Right ventricle myocardium inferior (tissue), 1 donor: ENCODE measurements at regions of chr7 and their contacts with region 1.

Region 1: DNA sequence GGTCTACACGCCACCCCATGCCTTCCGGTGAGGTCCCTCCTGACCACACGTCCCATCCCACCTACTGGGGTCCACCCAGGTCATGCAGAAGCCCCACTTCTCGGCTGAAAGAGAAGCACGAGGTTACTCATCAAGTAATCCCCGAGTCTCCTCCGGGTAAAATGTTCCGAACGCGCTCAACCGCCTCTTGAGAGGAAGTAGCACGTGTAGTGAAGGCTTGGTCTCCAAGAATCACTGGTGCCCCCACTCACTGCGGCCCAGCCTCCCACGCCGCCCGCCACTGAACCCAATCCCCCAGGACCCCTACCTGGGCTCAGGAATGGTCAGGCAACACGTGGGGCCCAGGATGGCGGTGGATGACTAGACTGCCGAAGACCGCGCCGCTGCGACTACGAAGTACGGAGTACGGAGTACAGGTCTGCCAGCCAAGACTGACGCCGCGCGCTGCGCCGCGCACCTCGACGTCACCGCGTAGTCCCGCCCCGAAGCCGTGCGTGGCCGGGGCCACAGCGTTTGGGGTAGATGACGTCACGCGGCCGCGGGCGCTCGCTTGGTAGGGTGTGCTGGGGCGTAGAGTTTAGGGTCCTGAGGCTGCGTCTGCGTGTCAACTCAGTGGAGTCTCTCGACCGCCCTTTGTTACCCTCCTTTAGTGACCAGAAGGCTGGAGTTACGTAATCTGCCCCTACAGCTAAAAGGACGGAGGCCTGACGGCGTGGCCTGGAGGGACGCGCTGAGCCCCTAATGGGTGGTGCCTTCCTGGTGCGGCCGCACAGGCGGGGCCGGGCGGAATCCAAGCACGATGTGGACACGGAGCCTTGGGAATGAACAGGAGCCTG is 7.6 kb upstream of the MYO1G start:
- DNase-seq: peak; percentile 98
- ATAC-seq: peak; percentile 99

Region 2: GRCh38 chr7:44581879-44582603 is 404.4 kb before region 1 on chr7 and contains the start of gene TMED4:
- intact Hi-C with region 1: loop called (anchors 10 kb)
- DNase-seq: peak; percentile 100
- ATAC-seq: peak; percentile 99
- total RNA-seq, gene TMED4: 49.7 TPM

Region 3: DNA sequence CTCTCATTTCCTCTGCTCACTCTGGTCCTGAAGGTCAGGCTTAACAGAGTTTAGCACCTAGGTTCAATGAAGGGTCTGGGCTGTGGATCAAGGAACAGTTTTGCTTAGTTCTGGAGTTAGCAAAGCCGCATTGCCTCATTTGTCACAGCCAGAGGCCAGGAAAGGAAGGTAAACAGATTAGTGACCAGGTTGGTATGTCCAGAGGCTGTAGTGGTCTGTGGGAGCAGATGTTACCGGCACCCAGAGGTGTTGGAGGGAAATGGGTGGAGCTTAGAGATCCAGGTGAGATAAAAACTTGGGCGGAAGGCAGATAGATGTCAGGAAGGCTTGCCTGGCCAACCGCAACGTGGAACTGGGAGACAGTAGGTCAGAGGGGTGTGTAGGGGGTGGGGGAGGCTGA is 274.4 kb before region 1 on chr7:
- intact Hi-C with region 1: no loop called
- DNase-seq: no peak
- ATAC-seq: no peak

Region 4: DNA sequence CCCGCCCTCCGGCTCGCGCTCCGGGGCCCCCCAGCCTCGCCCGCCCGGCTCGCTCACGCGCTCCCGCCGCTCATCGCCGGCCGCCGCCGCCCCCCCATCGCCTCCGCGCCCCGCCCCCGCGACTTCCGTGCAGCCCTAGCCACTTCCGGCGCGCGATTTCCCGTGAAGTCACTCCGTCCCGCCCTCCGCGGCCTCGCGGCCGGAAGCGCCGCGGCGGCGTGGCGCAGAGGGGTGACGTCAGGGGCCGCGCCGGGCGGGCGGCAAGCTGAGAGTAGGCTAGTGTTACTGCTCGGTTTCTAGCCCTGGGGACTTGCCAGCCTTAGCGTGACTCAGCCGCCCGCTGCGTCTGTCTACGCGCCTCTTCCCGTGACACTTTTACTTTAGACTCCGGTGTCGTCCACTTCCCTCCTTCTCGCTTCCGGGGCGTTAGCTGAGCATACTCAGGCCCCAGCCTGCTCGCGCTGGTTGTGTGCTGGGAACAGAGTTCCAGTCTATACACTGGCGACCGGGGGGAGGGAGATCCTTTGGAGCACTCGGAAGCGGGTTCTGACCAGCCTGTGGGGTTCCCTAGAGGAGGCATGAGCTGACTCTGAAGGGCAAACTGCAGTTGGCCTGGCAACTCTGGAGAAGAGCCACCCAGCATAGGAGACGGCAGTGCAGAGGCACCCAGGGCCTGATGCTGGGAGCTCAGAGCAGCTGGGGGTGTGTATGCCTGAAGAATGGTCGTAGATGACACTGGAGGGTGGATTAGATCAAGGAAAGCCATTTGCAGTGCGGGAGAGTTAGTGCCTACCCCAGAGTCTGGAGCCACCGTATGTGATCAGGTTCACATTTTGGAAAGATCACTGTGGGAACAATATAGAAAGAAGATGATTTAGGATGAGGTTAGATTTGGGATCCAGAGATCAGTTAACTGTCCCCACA is 100.8 kb before region 1 on chr7 and contains the start of gene PURB:
- intact Hi-C with region 1: loop called (anchors 5 kb)
- DNase-seq: peak; percentile 98
- ATAC-seq: peak; percentile 98
- total RNA-seq, gene PURB: 13.8 TPM

Region 5: GRCh38 chr7:44921607-44922359 is 64.7 kb before region 1 on chr7:
- intact Hi-C with region 1: no loop called
- DNase-seq: peak; percentile 97
- ATAC-seq: peak; percentile 90